A549 (cell line): ENCODE measurements at regions of chr5 and their contacts with region 1.

Region 1: GRCh38 chr5:154055201-154055600 is 16.4 kb downstream of the MFAP3 start:
- DNase-seq: no peak
- ATAC-seq: no peak
- H3K4me3 ChIP-seq: no peak overlapping the region
- H3K27ac ChIP-seq: no peak overlapping the region
- H3K4me1 ChIP-seq: no peaks in the 10 kb centered on the region
- CTCF ChIP-seq: no peak
- EP300 ChIP-seq: no peak
- POLR2A ChIP-seq: no peak
- RAD21 ChIP-seq: no peak

Region 2: GRCh38 chr5:154038707-154039457 is 16.3 kb before region 1 on chr5 and contains the starts of genes FAM114A2 and MFAP3:
- CTCF ChIA-PET with region 1: interaction called, 4 read pairs
- POLR2A ChIA-PET with region 1: interaction called, 12 read pairs
- DNase-seq: peak; percentile 91 to 95
- ATAC-seq: peak; percentile 100
- H3K4me3 ChIP-seq: peak within 1 kb of the TSS; percentile 63
- H3K27ac ChIP-seq: peak within 1 kb of the TSS; percentile 82 to 87
- H3K4me1 ChIP-seq: peaks cover 12% of the 10 kb centered on the region
- CTCF ChIP-seq: no peak
- EP300 ChIP-seq: 0 out of 5 replicates have a peak, but pooled peaks of 1 of the 2 experiments have one; percentile 17
- POLR2A ChIP-seq: peak; percentile 92
- RAD21 ChIP-seq: no peak
- polyA plus RNA-seq, gene FAM114A2: 19.0 and 21.3 TPM in 2 replicates
- polyA plus RNA-seq, gene MFAP3: 38.9 and 46.9 TPM in 2 replicates